Breast epithelium (tissue), 4 donors: ENCODE measurements at regions of chr6 and their contacts with region 1.

Region 1: DNA sequence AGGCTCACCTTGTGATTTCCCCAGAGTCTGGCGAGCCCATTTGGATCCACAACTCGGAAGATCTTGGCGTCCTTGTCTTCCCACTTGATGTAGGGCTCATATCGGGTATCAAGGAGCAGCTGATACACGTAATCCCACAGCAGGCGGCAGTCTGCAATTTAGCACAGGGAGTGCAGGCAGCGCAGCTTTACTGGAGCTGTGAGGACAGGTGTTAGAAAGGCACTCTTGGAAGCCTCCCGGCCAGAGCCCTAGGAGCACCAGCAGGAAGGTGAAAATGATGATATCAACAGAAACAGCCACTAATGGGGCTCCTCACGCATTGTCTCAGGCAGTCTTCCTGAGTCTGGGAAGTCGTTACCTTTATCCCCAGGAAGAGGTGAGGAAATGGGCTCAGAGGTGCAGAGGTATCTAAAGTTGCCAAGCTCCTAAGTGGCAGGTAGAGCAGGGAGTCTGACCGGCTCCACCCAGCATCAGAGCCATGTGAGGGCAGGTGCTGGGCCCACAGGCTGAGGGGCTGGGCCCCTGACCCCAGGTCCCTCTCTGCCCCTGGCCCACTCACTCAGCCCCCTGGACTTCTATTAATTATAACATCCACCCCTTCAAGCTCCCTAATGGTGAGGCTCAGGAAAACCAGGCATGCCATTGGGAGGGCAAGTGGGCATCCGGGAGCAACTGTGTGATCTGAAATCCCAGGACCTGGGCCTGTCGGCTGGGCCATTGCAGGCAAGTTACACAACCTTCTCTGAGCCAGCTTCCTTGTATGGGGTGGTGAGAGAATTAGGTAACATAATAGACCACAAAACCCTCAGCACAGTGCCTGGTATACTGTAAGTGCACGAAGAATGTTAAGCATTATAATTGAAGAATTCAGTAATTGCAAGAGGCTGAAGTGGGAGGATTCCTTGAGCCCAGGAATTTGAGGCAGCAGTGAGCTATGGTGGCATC is 18.3 kb downstream of the ETV7 start:
- DNase-seq: no peak
- H3K4me3 ChIP-seq: no peak overlapping the region
- H3K27ac ChIP-seq: no peak overlapping the region
- H3K4me1 ChIP-seq: no peaks in the 10 kb centered on the region
- H3K27me3 ChIP-seq: no peaks in the 10 kb centered on the region
- CTCF ChIP-seq: no peak
- POLR2A ChIP-seq: no peak

Region 2: DNA sequence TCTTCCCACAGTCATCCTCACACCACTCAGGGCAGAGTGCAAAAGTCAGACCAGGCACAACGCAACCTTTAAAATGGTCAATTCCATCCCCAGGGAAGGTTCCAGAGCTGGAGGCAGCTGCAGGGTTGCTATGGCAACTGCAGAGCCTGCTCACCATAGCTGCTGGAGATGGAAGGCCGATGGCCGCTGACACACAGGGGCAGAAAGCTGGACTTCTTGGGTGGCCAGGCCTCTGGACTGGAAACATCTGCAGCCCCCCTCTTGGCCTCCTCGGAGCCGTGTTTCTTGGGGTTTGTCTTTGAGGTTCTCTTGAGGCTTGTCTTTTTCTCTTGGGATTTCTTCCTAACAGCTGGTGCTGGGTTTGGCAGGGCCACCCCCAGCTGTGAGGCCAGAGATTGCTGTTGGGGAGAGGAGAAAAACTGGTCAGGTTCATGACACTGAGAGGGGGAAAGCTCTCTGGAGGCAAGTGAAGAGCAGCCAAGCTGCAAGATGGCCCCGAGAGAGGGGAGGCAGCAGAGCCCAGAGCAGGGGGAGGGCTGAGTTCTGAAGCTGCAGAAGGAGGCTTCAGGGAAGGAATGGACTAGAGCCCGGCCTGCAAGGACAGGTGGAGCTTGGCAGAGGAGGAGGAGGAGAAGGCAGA is 42.7 kb before region 1 on chr6:
- intact Hi-C with region 1: no loop called
- DNase-seq: no peak
- H3K4me3 ChIP-seq: no peak overlapping the region
- H3K27ac ChIP-seq: no peak overlapping the region
- H3K4me1 ChIP-seq: no peaks in the 10 kb centered on the region
- H3K27me3 ChIP-seq: no peaks in the 10 kb centered on the region
- CTCF ChIP-seq: no peak
- POLR2A ChIP-seq: no peak

Region 3: DNA sequence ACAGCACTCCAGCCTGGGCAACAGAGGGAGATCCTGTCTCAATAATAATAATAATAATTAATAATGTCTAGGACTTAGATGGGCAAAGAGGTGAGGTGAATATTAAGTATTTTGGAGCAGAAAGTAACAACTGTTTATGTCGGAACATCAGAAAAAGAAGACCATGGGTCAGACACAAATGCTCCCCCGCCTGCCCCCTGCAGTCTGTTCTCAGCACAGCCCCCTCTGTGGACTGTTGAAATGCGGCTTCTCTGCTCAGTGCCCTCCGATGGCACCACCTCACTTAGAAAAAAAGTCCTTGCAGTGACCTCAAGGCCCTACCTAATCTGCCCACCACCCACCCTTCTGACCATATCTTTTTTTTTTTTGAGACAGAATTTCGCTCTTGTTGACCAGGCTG is 23.4 kb after region 1 on chr6:
- intact Hi-C with region 1: loop called (anchors 1 kb)
- DNase-seq: no peak
- H3K4me3 ChIP-seq: no peak overlapping the region
- H3K27ac ChIP-seq: no peak overlapping the region
- H3K4me1 ChIP-seq: no peaks in the 10 kb centered on the region
- H3K27me3 ChIP-seq: no peaks in the 10 kb centered on the region
- CTCF ChIP-seq: no peak
- POLR2A ChIP-seq: no peak